Activated CD4-positive, alpha-beta memory T cell treated with anti-CD3 and anti-CD28 coated beads, Interleukin-2, amount 10 ng/mL, durations not matched to agents 7 days and 5 days (primary cell): ENCODE measurements at regions of chr6 and their contacts with region 1.

Region 1: GRCh38 chr6:127938701-127939100 is 37.8 kb upstream of the THEMIS start:
- DNase-seq: no peak
- H3K4me3 Mint-ChIP-seq: no peak overlapping the region
- H3K27ac Mint-ChIP-seq: peak overlapping the region; percentile 65
- H3K4me1 Mint-ChIP-seq: peaks cover 50% of the 10 kb centered on the region
- H3K27me3 Mint-ChIP-seq: no peaks in the 10 kb centered on the region

Region 2: DNA sequence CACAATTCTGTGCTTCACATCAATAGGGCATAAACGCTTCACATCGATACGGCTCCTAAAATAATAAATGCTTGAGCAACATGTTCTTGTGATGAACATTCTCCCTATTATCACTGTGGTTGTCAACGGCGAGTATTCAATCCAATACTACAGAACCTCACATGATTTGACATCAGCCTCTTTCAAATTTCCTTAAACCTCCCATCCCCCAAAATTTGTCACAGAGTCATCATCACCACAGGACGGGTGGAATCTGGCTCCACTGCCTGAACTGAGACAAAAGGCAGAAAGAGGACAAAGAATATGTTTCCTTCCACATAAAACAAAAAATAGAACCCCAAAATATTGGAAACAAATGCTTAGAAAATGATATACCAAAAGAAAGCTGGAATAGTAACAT is 45.2 kb before region 1 on chr6:
- CTCF ChIA-PET with region 1: no interaction called
- POLR2A ChIA-PET with region 1: interaction called, 14 read pairs
- DNase-seq: no peak
- H3K4me3 Mint-ChIP-seq: peak overlapping the region; percentile 61
- H3K27ac Mint-ChIP-seq: peak overlapping the region; percentile 78
- H3K4me1 Mint-ChIP-seq: peaks cover 52% of the 10 kb centered on the region
- H3K27me3 Mint-ChIP-seq: no peaks in the 10 kb centered on the region

Region 3: GRCh38 chr6:127907960-127908640 is 30.6 kb before region 1 on chr6:
- CTCF ChIA-PET with region 1: interaction called, 15 read pairs
- POLR2A ChIA-PET with region 1: interaction called, 55 read pairs
- DNase-seq: no peak
- H3K4me3 Mint-ChIP-seq: peak overlapping the region; percentile 77
- H3K27ac Mint-ChIP-seq: peak overlapping the region; percentile 81
- H3K4me1 Mint-ChIP-seq: peaks cover 40% of the 10 kb centered on the region
- H3K27me3 Mint-ChIP-seq: no peaks in the 10 kb centered on the region

Region 4: GRCh38 chr6:127918506-127919427 is 19.9 kb before region 1 on chr6:
- CTCF ChIA-PET with region 1: interaction called, 8 read pairs
- POLR2A ChIA-PET with region 1: interaction called, 42 read pairs
- DNase-seq: no peak
- H3K4me3 Mint-ChIP-seq: peak overlapping the region; percentile 54
- H3K27ac Mint-ChIP-seq: peak overlapping the region; percentile 62
- H3K4me1 Mint-ChIP-seq: peaks cover 74% of the 10 kb centered on the region
- H3K27me3 Mint-ChIP-seq: no peaks in the 10 kb centered on the region

Region 5: GRCh38 chr6:127951172-127951917 is 12.6 kb after region 1 on chr6:
- CTCF ChIA-PET with region 1: interaction called, 8 read pairs
- POLR2A ChIA-PET with region 1: interaction called, 17 read pairs
- DNase-seq: no peak
- H3K4me3 Mint-ChIP-seq: peak overlapping the region; percentile 17
- H3K27ac Mint-ChIP-seq: peak overlapping the region; percentile 94
- H3K4me1 Mint-ChIP-seq: peaks cover 56% of the 10 kb centered on the region
- H3K27me3 Mint-ChIP-seq: no peaks in the 10 kb centered on the region